ENCODE measurements at regions of chr7 and their contacts with region 1.

Region 1: GRCh38 chr7:129825496-129826267 is 127.1 kb downstream of the UBE2H start:
- DNase-seq: peak; percentile 93
- ATAC-seq: peak; percentile 88

Region 2: GRCh38 chr7:129664029-129665012 is 161.4 kb before region 1 on chr7:
- intact Hi-C with region 1: loop called (anchors 10 kb)
- DNase-seq: no peak
- ATAC-seq: no peak

Region 3: GRCh38 chr7:129952653-129953560 is 127.2 kb after region 1 on chr7 and contains the start of gene UBE2H:
- intact Hi-C with region 1: loop called (anchors 5 kb)
- DNase-seq: peak; percentile 96
- ATAC-seq: peak; percentile 88
- total RNA-seq, gene UBE2H: 96.8 TPM

Region 4: DNA sequence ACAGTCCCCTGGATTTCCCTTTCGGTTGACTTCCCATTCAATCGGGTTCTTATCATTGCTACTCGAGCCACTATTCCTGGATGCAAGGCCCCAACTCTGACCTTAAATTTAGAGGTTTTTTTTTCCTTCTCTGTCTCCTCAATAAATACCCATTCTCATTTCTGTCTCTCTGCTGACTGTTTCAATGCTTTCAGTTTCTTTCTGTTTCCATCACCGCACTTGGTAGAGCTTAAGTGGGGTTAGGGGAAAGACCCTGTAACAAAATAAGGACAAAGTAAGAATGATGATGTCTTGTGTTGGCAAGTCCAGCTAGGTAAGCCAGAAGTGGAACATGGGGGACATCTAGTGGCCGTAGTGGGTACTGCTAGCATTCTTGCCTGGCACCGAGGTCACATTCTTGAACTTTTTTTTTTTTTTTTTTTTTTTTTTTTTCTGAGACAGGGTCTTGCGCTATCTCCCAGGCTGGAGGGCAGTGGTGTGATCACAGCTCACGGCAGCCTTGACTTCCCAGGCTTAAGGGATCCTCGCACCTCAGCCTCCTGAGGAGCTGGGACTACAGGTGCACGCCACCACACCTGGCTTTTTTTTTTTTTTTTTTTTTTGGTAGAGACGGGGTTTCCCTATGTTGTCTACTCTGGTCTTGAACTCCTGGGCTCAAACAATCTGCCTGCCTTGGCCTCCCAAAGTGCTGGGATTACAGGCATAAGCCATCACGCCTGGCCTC is 185.2 kb after region 1 on chr7:
- intact Hi-C with region 1: loop called (anchors 5 kb)
- DNase-seq: peak; percentile 84
- ATAC-seq: peak; percentile 73